ENCODE measurements at regions of chr5 and their contacts with region 1.

Region 1: GRCh38 chr5:77066184-77066583 is 20.9 kb downstream of the ZBED3 start:
- DNase-seq: no peak
- H3K4me3 ChIP-seq: no peak overlapping the region
- H3K4me3 Mint-ChIP-seq: no peak overlapping the region
- H3K27ac ChIP-seq: no peak overlapping the region
- H3K27ac Mint-ChIP-seq: no peak overlapping the region
- H3K4me1 ChIP-seq: no peaks in the 10 kb centered on the region
- H3K4me1 Mint-ChIP-seq: peaks cover 5 to 14% (median 12%) of the 10 kb centered on the region in 4 donors
- H3K27me3 ChIP-seq: no peaks in the 10 kb centered on the region
- H3K27me3 Mint-ChIP-seq: no peaks in the 10 kb centered on the region

Region 2: GRCh38 chr5:77076961-77077823 is 11.0 kb after region 1 on chr5:
- CTCF ChIA-PET with region 1: interaction called, 12 read pairs
- POLR2A ChIA-PET with region 1: no interaction called
- intact Hi-C with region 1: no loop called
- DNase-seq: peak; percentile 25 to 44 (median 35)
- H3K4me3 ChIP-seq: no peak overlapping the region
- H3K4me3 Mint-ChIP-seq: peak overlapping the region; percentile 39 to 78 (median 60)
- H3K27ac ChIP-seq: no peak overlapping the region
- H3K27ac Mint-ChIP-seq: peak overlapping the region in 1 of 7 donors; percentile 26
- H3K4me1 ChIP-seq: peaks cover 5% of the 10 kb centered on the region
- H3K4me1 Mint-ChIP-seq: peaks cover 6 to 9% (median 8%) of the 10 kb centered on the region in 4 donors
- H3K27me3 ChIP-seq: no peaks in the 10 kb centered on the region
- H3K27me3 Mint-ChIP-seq: no peaks in the 10 kb centered on the region

Region 3: DNA sequence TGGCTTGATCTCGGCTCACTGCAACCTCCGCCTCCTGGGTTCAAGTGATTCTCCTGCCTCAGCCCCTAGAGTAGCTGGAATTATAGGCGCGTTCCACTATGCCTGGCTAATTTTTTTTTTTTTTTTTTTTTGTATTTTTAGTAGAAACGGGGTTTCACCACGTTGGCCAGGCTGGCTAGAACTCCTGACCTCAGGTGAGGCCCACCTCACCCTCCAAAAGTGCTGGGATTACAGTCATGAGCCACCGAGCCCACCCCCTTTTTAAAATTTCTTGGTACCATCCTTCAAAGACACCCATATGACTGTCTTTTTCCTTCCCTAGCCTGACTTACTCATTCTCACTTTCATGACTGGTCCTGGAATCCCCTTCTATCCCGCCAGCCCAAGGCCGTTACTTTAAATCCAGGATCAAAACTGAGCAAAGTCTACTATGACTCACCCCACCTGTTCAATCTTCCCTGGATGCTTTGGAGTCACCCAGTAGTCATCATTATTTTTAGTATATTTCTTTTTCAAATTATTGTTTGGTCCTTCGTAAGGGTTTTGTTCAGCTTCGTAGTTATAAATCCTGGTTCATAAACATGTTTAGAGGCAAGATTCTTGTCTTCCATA is 711.2 kb after region 1 on chr5:
- CTCF ChIA-PET with region 1: no interaction called
- POLR2A ChIA-PET with region 1: no interaction called
- intact Hi-C with region 1: no loop called
- DNase-seq: no peak
- H3K4me3 ChIP-seq: no peak overlapping the region
- H3K4me3 Mint-ChIP-seq: peak overlapping the region in 5 of 8 donors; percentile 29 to 96 (median 52)
- H3K27ac ChIP-seq: no peak overlapping the region
- H3K27ac Mint-ChIP-seq: peak overlapping the region in 3 of 7 donors; percentile 1 to 88 (median 6)
- H3K4me1 ChIP-seq: peaks cover 32% of the 10 kb centered on the region
- H3K4me1 Mint-ChIP-seq: peaks cover 25 to 40% (median 32%) of the 10 kb centered on the region in 4 donors
- H3K27me3 ChIP-seq: no peaks in the 10 kb centered on the region
- H3K27me3 Mint-ChIP-seq: no peaks in the 10 kb centered on the region